Head of caudate nucleus (tissue), 42 donors: ENCODE measurements at regions of chr16 and their contacts with region 1.

Region 1: GRCh38 chr16:79601931-79602627 is 1.5 kb upstream of the MAF start:
- DNase-seq: peak; percentile 62 to 95 (median 85)

Region 2: DNA sequence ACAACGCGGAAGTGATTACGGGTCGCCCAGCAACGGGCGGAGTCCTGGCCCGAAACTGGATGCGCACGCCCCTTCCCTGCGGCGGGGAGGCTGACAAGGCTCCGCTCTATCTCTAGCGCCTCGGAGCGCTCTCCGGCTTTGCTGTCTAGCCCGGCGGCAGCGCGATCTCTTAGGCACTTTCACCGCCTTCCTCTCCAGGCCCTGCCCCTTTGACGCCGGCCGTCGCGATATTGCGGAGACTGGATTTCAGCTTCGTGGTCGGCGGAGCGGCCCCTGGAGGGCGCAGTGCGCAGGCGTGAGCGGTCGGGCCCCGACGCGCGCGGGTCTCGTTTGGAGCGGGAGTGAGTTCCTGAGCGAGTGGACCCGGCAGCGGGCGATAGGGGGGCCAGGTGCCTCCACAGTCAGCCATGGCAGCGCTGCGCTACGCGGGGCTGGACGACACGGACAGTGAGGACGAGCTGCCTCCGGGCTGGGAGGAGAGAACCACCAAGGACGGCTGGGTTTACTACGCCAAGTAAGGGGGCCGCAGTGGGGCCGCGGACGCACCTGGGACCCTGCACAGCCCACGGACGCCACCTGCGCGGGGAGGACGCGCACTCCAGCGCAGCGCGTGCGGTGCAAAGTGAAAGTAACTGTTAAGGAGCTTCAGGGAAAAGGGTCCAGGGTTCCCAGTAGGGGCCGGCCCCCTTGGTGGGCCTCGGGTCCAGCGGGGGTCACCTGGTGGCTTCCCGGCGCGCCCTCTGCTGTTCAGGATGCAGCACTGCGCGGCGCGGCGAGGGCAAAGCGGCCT is 1502.5 kb before region 1 on chr16 and contains the start of gene WWOX:
- intact Hi-C with region 1: loop called (anchors 10 kb)
- DNase-seq: peak; percentile 90 to 98 (median 96)

Region 3: GRCh38 chr16:78503602-78504001 is 1098.5 kb before region 1 on chr16:
- intact Hi-C with region 1: loop called (anchors 5 kb)
- DNase-seq: peak in 35 of 42 donors; percentile 13 to 92 (median 68)

Region 4: GRCh38 chr16:79261481-79261940 is 340.6 kb before region 1 on chr16:
- intact Hi-C with region 1: loop called (anchors 10 kb)
- DNase-seq: peak in 40 of 42 donors; percentile 15 to 80 (median 51)

Region 5: DNA sequence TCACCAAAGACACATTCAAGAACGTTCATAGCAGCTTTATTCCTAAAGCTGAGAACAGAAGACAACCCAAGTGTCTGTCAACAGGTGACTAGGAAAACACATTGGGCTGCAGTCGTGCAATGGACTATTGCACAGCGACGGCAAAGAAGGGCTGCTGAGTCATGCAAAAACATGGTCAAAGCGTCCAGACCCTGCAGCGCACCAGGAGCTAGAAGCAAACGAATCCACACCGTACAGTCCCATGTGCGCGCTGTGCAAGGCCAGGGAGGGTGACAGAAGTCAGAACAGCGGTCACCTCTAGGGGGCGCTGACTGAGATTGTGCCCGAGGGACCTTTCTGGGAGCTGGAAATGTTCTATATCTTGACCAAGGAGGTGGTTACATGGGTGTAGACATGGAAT is 268.0 kb before region 1 on chr16:
- intact Hi-C with region 1: loop called (anchors 5 kb)
- DNase-seq: peak in 10 of 42 donors; percentile 10 to 70 (median 24)